ENCODE measurements at regions of chr11 and their contacts with region 1.

Region 1: DNA sequence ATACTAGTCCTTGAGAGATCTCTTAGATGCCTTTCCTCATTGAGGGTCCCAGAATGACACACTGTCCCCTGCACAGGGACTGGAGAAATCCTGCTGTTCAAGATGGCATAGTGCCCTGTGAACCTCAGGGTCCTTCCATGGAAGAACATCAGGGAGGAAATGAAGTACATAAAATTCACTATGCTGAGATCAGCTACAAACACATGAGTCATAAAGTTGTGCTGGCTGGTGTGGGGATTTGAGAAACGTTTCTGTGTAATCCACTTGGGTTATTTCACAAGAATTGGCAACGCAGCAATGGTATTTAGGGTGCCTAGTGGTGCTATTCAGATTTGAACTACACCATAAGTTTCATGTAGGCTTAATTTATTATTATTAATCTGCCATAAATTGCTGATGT is 174.4 kb downstream of the MAML2 start:
- DNase-seq: peak in 1 of 2 donors; percentile 30
- ATAC-seq: peak; percentile 48 to 90 (median 68)
- H3K4me3 ChIP-seq: no peak overlapping the region
- H3K27ac ChIP-seq: peak overlapping the region in 8 of 10 donors; percentile 1 to 78 (median 36)
- H3K4me1 ChIP-seq: peaks cover 0 to 56% (median 31%) of the 10 kb centered on the region in 9 donors
- H3K27me3 ChIP-seq: no peaks in the 10 kb centered on the region
- CTCF ChIP-seq: no peak

Region 2: GRCh38 chr11:96215110-96215782 is 46.6 kb after region 1 on chr11:
- intact Hi-C with region 1: loop called in 2 of 10 experiments (anchors 5 to 10 kb)
- DNase-seq: no peak
- ATAC-seq: peak in 6 of 8 donors; percentile 18 to 46 (median 39)
- H3K4me3 ChIP-seq: no peak overlapping the region
- H3K27ac ChIP-seq: peak overlapping the region in 9 of 10 donors; percentile 46 to 84 (median 71)
- H3K4me1 ChIP-seq: peaks cover 12 to 82% (median 73%) of the 10 kb centered on the region in 9 donors
- H3K27me3 ChIP-seq: no peaks in the 10 kb centered on the region
- CTCF ChIP-seq: no peak

Region 3: DNA sequence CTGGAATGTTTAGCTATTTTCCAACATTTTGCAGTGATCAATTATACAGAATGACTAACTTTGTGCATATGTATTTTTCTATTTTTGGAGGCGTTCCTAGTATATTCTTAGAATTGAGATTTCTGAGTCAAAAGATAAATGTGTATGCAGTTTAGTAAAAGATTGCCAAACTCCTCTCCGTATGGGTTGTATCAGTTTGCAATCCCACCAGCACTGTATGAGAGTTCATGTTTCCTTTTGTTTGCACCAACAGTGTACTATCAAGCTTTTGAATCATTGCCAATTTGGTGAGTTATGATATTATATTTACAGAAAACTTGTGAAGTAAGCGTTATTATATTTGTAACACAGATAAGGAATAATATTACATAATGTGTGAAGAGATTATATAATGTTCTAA is 879.9 kb after region 1 on chr11:
- intact Hi-C with region 1: no loop called
- DNase-seq: no peak
- ATAC-seq: no peak
- H3K4me3 ChIP-seq: no peak overlapping the region
- H3K27ac ChIP-seq: no peak overlapping the region
- H3K4me1 ChIP-seq: no peaks in the 10 kb centered on the region
- H3K27me3 ChIP-seq: no peaks in the 10 kb centered on the region
- CTCF ChIP-seq: no peak

Measured in heart right ventricle (tissue), 16 donors.